ENCODE measurements at regions of chr16 and their contacts with region 1.

Region 1: GRCh38 chr16:50210266-50211038 is 55.9 kb upstream of the ADCY7 start:
- DNase-seq: peak; percentile 85
- ATAC-seq: peak; percentile 98
- H3K4me3 Mint-ChIP-seq: no peak overlapping the region
- H3K27ac Mint-ChIP-seq: peak overlapping the region; percentile 84
- H3K4me1 Mint-ChIP-seq: peaks cover 36% of the 10 kb centered on the region
- H3K27me3 Mint-ChIP-seq: no peaks in the 10 kb centered on the region

Region 2: DNA sequence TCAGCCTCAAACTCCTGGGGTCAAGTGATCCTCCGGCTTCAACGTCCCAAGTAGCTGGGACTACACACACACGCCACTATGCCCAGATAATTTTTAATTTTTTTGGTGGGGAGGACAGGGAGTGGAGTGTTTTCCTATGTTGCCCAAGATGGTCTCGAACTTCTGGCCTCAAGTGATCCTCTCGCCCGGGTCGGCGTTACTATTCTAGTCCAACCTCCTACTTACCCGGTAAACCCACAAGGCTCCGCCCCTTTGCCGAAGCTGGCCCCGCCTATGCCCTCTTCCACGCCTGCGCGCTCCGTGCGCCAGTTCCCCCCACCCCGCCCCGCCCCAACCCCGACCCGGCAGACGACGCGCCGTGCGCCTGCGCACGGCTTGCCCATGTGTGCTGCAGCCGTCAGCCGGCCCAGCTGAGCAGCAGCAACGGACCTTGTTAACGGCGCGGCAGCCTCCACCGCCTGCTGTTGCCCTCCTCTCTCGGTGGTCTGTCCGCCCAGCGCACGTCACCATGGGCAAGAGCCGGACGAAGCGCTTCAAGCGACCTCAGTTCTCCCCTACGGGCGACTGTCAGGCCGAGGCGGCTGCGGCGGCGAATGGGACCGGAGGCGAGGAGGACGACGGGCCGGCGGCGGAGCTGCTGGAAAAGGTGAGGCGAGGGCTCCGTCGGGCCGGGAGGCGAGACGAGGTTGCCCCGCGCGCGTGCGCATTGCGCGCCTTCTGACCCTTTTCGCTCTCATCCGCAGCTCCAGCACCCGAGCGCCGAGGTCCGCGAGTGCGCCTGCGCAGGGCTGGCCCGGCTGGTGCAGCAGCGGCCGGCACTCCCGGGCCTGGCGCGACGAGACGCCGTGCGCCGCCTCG is 144.6 kb before region 1 on chr16 and contains the start of gene HEATR3:
- CTCF ChIA-PET with region 1: interaction called, 47 read pairs
- POLR2A ChIA-PET with region 1: no interaction called
- intact Hi-C with region 1: loop called (anchors 1 kb)
- DNase-seq: peak; percentile 97
- ATAC-seq: peak; percentile 86
- H3K4me3 Mint-ChIP-seq: peak within 1 kb of the TSS; percentile 87
- H3K27ac Mint-ChIP-seq: peak within 1 kb of the TSS; percentile 88
- H3K4me1 Mint-ChIP-seq: peaks cover 33% of the 10 kb centered on the region
- H3K27me3 Mint-ChIP-seq: no peaks in the 10 kb centered on the region
- total RNA-seq, gene HEATR3: 22.2 to 28.7 TPM

Region 3: DNA sequence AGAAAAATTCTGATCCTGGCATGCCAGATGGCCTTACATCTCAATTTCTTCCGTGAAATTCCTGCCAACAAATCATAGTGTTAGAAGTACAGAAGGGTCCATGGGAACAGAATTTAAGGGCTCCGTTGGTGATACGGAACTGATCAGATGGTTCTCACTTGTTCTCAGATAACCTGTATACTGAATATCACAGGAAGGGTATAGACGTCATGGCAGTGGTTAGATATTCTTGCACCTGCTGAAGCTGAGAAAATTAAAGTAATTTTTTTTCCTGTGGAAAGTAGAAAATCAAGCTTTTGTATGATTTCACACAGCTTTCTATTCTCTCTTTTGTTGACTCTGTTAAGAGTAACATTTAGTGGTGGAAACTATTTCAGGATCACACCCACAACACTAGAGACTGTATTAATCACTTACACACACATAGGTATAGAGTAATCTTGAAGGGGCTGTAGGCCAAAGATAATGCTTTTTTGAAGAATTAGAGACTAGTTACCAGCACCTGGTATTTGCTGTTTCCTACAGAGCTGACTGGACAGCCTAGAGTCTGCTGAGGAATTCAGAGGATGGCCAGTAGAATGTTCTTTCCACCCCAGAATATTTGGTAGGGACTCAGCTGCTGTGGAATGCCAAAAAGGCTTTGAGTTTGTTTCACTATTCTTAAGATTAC is 49.8 kb before region 1 on chr16:
- CTCF ChIA-PET with region 1: interaction called, 12 read pairs
- POLR2A ChIA-PET with region 1: interaction called, 5 read pairs
- intact Hi-C with region 1: loop called in 1 of 2 experiments (anchors 5 kb)
- DNase-seq: no peak
- ATAC-seq: peak; percentile 92
- H3K4me3 Mint-ChIP-seq: peak overlapping the region; percentile 39
- H3K27ac Mint-ChIP-seq: peak overlapping the region; percentile 91
- H3K4me1 Mint-ChIP-seq: peaks cover 67% of the 10 kb centered on the region
- H3K27me3 Mint-ChIP-seq: no peaks in the 10 kb centered on the region

Region 4: DNA sequence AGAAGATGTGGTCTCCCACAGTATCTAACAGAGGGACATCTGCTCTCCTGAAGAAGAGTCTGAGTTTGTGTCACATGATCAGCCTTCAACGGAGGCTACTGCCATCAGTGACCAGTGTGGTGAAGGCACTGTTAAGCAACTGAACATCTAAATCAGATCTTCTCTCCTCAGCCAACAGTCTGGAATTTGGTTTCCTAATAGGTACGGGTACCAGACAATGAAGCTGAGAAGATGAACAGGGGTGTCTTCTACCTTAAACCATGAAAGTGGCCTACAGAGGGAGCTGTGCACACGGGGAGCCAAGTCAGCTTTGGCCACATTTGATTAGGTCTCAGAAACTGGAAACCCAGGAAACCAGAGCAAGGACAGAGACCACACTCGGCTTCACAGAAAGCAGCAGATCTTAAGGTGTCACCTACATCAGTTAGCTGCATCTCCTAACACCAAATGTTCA is 116.5 kb after region 1 on chr16:
- CTCF ChIA-PET with region 1: interaction called, 12 read pairs
- POLR2A ChIA-PET with region 1: no interaction called
- intact Hi-C with region 1: loop called in 1 of 2 experiments (anchors 10 kb)
- DNase-seq: peak; percentile 81
- ATAC-seq: peak; percentile 92
- H3K4me3 Mint-ChIP-seq: no peak overlapping the region
- H3K27ac Mint-ChIP-seq: peak overlapping the region; percentile 82
- H3K4me1 Mint-ChIP-seq: peaks cover 58% of the 10 kb centered on the region
- H3K27me3 Mint-ChIP-seq: no peaks in the 10 kb centered on the region

Region 5: GRCh38 chr16:50509521-50510341 is 299.3 kb after region 1 on chr16:
- CTCF ChIA-PET with region 1: interaction called, 5 read pairs
- POLR2A ChIA-PET with region 1: no interaction called
- intact Hi-C with region 1: loop called in 1 of 2 experiments (anchors 5 kb)
- DNase-seq: peak; percentile 65
- ATAC-seq: peak; percentile 36
- H3K4me3 Mint-ChIP-seq: no peak overlapping the region
- H3K27ac Mint-ChIP-seq: no peak overlapping the region
- H3K4me1 Mint-ChIP-seq: no peaks in the 10 kb centered on the region
- H3K27me3 Mint-ChIP-seq: no peaks in the 10 kb centered on the region

Measured in activated CD4-positive, alpha-beta T cell treated with anti-CD3 and anti-CD28 coated beads for 36 hours (primary cell).